ENCODE measurements at regions of chr19 and their contacts with region 1.

Region 1: DNA sequence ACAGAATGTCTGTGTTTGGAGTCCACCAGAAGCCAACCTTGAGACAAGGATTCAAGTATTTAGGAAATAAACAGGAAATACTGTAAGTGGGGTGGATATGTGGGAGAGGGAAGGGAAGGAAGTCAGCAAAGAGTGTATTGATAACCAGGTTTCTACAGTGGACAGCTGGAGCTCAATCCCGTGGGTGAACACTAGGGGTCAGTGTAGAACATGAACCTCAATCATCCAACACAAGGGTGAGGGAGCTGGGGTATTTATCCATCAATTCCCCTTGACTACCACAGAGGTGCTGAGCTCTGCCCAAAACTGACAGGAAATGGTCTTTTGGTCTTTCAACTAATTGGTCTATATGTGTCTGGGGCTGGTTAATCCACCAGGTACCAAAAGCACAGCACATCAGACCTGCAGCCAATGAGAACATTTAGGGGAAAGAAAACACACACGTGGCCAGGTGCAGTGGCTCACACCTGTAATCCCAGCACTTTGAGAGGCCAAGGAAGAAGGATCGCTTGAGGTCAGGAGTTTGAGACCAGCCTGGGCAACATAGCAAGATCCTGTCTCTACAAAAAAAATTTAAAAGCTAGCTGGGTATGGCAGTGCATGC is 5.6 kb upstream of the SYDE1 start:
- DNase-seq: peak; percentile 76
- H3K4me3 Mint-ChIP-seq: no peak overlapping the region
- H3K27ac Mint-ChIP-seq: no peak overlapping the region
- H3K4me1 Mint-ChIP-seq: peaks cover 3% of the 10 kb centered on the region
- H3K27me3 Mint-ChIP-seq: peaks cover 22% of the 10 kb centered on the region

Region 2: DNA sequence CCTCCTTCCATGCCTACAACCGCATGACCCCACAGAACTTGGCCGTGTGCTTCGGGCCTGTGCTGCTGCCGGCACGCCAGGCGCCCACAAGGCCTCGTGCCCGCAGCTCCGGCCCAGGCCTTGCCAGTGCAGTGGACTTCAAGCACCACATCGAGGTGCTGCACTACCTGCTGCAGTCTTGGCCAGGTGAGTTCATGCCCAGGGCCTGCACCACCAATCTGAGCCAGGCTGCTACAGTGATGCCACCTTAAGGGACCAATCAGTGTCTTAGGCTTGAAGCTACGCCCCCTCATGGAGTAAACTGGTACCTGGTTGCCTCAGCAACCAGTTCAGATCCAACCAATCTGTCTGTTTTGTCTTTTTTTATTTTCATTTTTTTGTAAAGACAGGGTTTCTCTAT is 10.8 kb after region 1 on chr19:
- CTCF ChIA-PET with region 1: interaction called, 12 read pairs
- DNase-seq: no peak
- H3K4me3 Mint-ChIP-seq: no peak overlapping the region
- H3K27ac Mint-ChIP-seq: no peak overlapping the region
- H3K4me1 Mint-ChIP-seq: peaks cover 5% of the 10 kb centered on the region
- H3K27me3 Mint-ChIP-seq: peaks cover 22% of the 10 kb centered on the region

Region 3: DNA sequence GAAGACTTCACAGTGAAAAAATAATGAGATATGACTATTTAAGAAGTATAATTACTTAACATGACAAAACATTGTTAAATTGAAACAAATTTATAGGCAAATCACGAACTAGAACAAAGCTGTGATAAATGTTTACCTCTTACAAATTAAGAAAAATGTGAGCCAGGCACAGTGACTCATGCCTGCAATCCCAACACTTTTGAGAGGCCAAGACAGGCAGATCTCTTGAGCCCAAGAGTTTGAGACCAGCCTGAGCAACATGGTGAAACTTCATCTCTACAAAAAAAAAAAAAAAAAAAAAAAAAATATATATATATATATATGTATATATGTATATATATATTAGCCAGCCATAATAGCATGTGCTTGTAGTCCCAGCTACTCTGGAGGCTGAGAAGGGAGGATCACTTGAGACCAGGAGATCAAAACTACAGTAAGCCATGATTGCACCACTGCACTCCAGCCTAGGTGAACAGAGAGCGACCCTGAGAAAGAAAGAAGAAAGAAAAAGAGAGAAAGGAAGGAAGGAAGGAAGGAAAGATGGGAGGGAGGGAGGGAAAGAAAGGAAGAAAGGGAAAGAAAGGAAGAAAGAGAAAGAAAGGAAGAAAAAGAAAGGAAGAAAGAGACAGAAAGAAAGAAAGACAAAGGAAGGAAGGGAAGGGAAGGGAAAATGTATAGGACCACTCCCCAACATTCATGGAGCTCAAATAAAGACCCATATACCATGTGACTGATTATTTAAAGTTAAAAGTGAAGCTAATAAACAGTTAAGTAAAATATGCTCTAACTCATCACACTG is 45.3 kb after region 1 on chr19:
- CTCF ChIA-PET with region 1: interaction called, 76 read pairs
- DNase-seq: no peak
- H3K4me3 Mint-ChIP-seq: no peak overlapping the region
- H3K27ac Mint-ChIP-seq: no peak overlapping the region
- H3K4me1 Mint-ChIP-seq: peaks cover 4% of the 10 kb centered on the region
- H3K27me3 Mint-ChIP-seq: peaks cover 21% of the 10 kb centered on the region

Region 4: GRCh38 chr19:15154002-15154612 is 52.5 kb after region 1 on chr19:
- CTCF ChIA-PET with region 1: interaction called, 76 read pairs
- DNase-seq: peak; percentile 63
- H3K4me3 Mint-ChIP-seq: no peak overlapping the region
- H3K27ac Mint-ChIP-seq: no peak overlapping the region
- H3K4me1 Mint-ChIP-seq: no peaks in the 10 kb centered on the region
- H3K27me3 Mint-ChIP-seq: peaks cover 15% of the 10 kb centered on the region

Measured in activated naive CD4-positive, alpha-beta T cell treated with anti-CD3 and anti-CD28 coated beads, Interleukin-2, amount 10 ng/mL, durations not matched to agents 7 days and 5 days (primary cell).